Heart right ventricle (tissue), 16 donors: ENCODE measurements at regions of chr13 and their contacts with region 1.

Region 1: GRCh38 chr13:103815619-103816018 is 749.4 kb upstream of the SLC10A2 start:
- DNase-seq: no peak
- ATAC-seq: peak in 2 of 8 donors; percentile 9 to 25
- H3K4me3 ChIP-seq: no peak overlapping the region
- H3K27ac ChIP-seq: no peak overlapping the region
- H3K4me1 ChIP-seq: peaks cover 0 to 4% (median 0%) of the 10 kb centered on the region in 9 donors
- H3K27me3 ChIP-seq: no peaks in the 10 kb centered on the region
- CTCF ChIP-seq: no peak

Region 2: GRCh38 chr13:103726808-103727207 is 88.8 kb before region 1 on chr13:
- intact Hi-C with region 1: no loop called
- DNase-seq: no peak
- ATAC-seq: no peak
- H3K4me3 ChIP-seq: no peak overlapping the region
- H3K27ac ChIP-seq: no peak overlapping the region
- H3K4me1 ChIP-seq: peaks cover 0 to 6% (median 0%) of the 10 kb centered on the region in 9 donors
- H3K27me3 ChIP-seq: no peaks in the 10 kb centered on the region
- CTCF ChIP-seq: no peak

Region 3: GRCh38 chr13:103762523-103762922 is 53.1 kb before region 1 on chr13:
- intact Hi-C with region 1: loop called in 1 of 10 experiments (anchors 2 kb)
- DNase-seq: no peak
- ATAC-seq: no peak
- H3K4me3 ChIP-seq: no peak overlapping the region
- H3K27ac ChIP-seq: no peak overlapping the region
- H3K4me1 ChIP-seq: no peaks in the 10 kb centered on the region
- H3K27me3 ChIP-seq: no peaks in the 10 kb centered on the region
- CTCF ChIP-seq: no peak